Astrocyte of the cerebellum (primary cell): ENCODE measurements at regions of chr9 and their contacts with region 1.

Region 1: GRCh38 chr9:6272229-6272598 is 56.0 kb upstream of the TPD52L3 start:
- DNase-seq: no peak
- H3K4me3 ChIP-seq: no peak overlapping the region
- CTCF ChIP-seq: no peak

Region 2: DNA sequence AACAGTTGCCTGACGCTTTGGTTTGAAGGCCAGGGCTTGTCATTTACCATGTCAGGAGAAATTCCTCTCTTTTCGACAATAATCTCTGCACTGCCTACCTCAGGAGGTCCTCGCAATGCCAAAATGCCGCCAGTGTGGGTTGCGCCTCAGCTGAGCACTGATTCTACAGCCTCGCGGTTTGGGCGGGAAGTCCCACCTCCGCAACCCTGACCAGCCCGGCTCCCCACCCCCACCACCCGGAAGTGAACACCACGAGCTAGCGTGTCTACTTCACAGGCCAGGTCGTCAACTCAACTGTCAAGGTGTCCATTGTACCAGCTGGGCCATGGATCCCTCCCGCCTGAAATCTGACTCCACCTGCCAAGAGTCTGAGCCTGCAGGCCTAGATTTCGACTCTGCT is 55.9 kb after region 1 on chr9 and contains the start of gene TPD52L3:
- in situ Hi-C with region 1: loop called (anchors 5 kb)
- DNase-seq: no peak
- H3K4me3 ChIP-seq: no peak within 1 kb of the TSS
- CTCF ChIP-seq: no peak

Region 3: DNA sequence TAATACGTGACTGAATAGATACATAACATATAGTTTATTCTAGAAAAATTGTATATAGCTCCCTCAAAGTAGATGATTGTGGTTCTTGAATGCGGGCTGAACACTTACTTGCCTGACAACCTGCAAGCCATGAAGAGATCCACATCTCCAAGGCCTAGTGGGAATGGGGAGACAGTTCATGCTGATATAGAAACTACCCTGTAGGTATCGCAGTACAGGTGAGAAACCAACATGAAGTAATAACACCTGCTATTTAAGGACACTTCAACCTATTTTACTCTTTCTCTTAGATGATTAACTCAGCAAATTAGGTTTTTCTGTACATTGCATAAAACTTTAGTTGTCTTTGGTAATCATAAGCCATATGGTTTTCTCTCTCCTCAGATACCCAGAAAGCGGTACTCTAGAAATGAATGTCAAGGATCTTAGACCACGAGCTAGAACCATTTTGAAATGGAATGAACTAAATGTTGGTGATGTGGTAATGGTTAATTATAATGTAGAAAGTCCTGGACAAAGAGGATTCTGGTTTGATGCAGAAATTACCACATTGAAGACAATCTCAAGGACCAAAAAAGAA is 188.1 kb after region 1 on chr9:
- in situ Hi-C with region 1: no loop called
- DNase-seq: no peak
- H3K4me3 ChIP-seq: no peak overlapping the region
- CTCF ChIP-seq: no peak